IMR-90 (cell line): ENCODE measurements at regions of chr19 and their contacts with region 1.

Region 1: GRCh38 chr19:54023191-54023590 is 31.8 kb downstream of the CACNG6 start:
- DNase-seq: no peak
- ATAC-seq: no peak
- H3K4me3 ChIP-seq: no peak overlapping the region
- H3K27ac ChIP-seq: no peak overlapping the region
- H3K4me1 ChIP-seq: no peaks in the 10 kb centered on the region
- H3K27me3 ChIP-seq: no peaks in the 10 kb centered on the region
- CTCF ChIP-seq: no peak
- POLR2A ChIP-seq: no peak
- RAD21 ChIP-seq: no peak

Region 2: DNA sequence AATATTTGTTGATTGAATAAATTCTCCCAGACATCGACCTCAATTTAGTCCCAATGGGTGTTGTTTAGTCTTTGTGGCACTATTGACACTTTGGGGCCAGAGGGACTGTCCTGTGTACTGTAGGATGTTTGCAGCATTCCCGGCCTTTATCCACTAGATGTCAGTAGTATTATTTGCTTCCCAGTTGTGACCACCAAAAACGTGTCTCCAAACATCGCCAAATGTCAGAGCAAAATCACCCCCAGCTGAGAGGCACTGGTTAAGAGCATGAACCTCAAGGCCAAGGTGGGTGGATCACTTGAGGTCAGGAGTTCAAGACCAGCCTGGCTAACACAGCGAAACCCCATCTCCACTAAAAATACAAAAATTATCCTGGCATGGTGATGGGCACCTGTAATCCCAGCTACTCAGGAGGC is 214.5 kb before region 1 on chr19:
- CTCF ChIA-PET with region 1: interaction called, 13 read pairs
- POLR2A ChIA-PET with region 1: no interaction called
- dilution Hi-C with region 1: no loop called
- in situ Hi-C with region 1: no loop called
- intact Hi-C with region 1: loop called (anchors 1 kb)
- DNase-seq: peak; percentile 42
- ATAC-seq: peak; percentile 92
- H3K4me3 ChIP-seq: no peak overlapping the region
- H3K27ac ChIP-seq: no peak overlapping the region
- H3K4me1 ChIP-seq: no peaks in the 10 kb centered on the region
- H3K27me3 ChIP-seq: no peaks in the 10 kb centered on the region
- CTCF ChIP-seq: peak; percentile 67
- POLR2A ChIP-seq: no peak
- RAD21 ChIP-seq: peak; percentile 77

Region 3: GRCh38 chr19:53844849-53845246 is 178.3 kb before region 1 on chr19:
- CTCF ChIA-PET with region 1: interaction called, 6 read pairs
- POLR2A ChIA-PET with region 1: interaction called, 4 read pairs
- dilution Hi-C with region 1: no loop called
- in situ Hi-C with region 1: no loop called
- intact Hi-C with region 1: loop called (anchors 1 kb)
- DNase-seq: no peak
- ATAC-seq: no peak
- H3K4me3 ChIP-seq: no peak overlapping the region
- H3K27ac ChIP-seq: no peak overlapping the region
- H3K4me1 ChIP-seq: peaks cover 3% of the 10 kb centered on the region; the same call in 1 of the 2 replicates
- H3K27me3 ChIP-seq: no peaks in the 10 kb centered on the region
- CTCF ChIP-seq: no peak
- POLR2A ChIP-seq: no peak
- RAD21 ChIP-seq: no peak

Region 4: DNA sequence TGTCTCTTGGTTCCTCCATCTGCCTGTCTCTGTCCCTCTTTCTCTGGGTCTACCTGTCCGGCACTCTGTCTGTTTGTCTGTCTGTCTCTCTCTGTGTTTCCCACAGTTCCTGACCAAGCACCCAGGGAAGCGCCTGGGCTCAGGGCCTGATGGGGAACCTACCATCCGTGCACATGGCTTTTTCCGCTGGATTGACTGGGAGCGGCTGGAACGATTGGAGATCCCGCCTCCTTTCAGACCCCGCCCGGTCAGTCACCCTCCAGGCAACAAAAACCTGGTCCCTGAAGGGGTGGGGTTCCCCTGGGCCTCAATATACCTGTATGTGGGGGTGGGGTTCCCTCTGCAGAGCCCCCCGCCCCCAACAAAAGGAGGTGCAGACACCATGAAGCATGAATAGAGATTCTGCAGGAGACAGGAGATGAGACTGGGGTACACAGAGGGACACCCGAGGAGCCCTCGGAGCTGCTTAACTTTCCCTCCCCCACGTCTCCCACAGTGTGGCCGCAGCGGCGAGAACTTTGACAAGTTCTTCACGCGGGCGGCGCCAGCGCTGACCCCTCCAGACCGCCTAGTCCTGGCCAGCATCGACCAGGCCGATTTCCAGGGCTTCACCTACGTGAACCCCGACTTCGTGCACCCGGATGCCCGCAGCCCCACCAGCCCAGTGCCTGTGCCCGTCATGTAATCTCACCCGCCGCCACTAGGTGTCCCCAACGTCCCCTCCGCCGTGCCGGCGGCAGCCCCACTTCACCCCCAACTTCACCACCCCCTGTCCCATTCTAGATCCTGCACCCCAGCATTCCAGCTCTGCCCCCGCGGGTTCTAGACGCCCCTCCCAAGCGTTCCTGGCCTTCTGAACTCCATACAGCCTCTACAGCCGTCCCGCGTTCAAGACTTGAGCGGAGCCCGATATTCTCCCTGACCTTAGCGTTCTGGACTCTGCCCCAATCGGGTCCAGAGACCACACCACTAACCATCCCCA is 116.7 kb before region 1 on chr19:
- CTCF ChIA-PET with region 1: interaction called, 9 read pairs
- POLR2A ChIA-PET with region 1: no interaction called
- dilution Hi-C with region 1: no loop called
- in situ Hi-C with region 1: no loop called
- intact Hi-C with region 1: loop called (anchors 1 kb)
- DNase-seq: no peak
- ATAC-seq: peak; percentile 67
- H3K4me3 ChIP-seq: no peak overlapping the region
- H3K27ac ChIP-seq: no peak overlapping the region
- H3K4me1 ChIP-seq: peaks cover 5% of the 10 kb centered on the region; the same call in 1 of the 2 replicates
- H3K27me3 ChIP-seq: peaks cover 30% of the 10 kb centered on the region
- CTCF ChIP-seq: peak; percentile 70
- POLR2A ChIP-seq: no peak
- RAD21 ChIP-seq: peak; percentile 58